PC-9 (cell line): ENCODE measurements at regions of chr9 and their contacts with region 1.

Region 1: DNA sequence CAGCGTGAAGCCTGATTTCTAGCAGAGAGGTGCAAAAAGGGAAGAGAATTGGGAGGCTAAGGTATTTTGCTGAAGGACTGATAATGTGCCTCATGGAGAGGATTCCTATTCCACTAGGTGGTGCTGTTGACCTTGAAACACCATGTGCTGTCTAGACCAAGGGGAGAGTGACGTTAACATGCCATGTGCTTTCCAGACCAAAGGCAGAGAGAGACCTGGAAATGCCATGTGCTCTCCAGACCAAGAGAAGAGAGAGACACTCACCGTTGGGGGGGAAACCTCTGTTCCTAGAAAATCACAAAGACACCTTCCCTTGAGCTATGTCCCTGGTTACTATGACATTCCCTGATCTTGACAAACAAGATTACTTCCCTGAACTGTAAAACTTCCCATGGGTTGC is 286.0 kb upstream of the TUSC1 start:
- DNase-seq: peak; percentile 4 to 43
- H3K4me3 ChIP-seq: no peak overlapping the region
- H3K27ac ChIP-seq: no peak overlapping the region
- H3K4me1 ChIP-seq: no peaks in the 10 kb centered on the region
- H3K27me3 ChIP-seq: no peaks in the 10 kb centered on the region
- CTCF ChIP-seq: peak; percentile 68

Region 2: GRCh38 chr9:25703701-25704357 is 260.4 kb before region 1 on chr9:
- CTCF ChIA-PET with region 1: no interaction called
- POLR2A ChIA-PET with region 1: no interaction called
- intact Hi-C with region 1: no loop called
- DNase-seq: no peak
- H3K4me3 ChIP-seq: no peak overlapping the region
- H3K27ac ChIP-seq: no peak overlapping the region
- H3K4me1 ChIP-seq: peaks cover 20% of the 10 kb centered on the region
- H3K27me3 ChIP-seq: no peaks in the 10 kb centered on the region
- CTCF ChIP-seq: no peak

Region 3: DNA sequence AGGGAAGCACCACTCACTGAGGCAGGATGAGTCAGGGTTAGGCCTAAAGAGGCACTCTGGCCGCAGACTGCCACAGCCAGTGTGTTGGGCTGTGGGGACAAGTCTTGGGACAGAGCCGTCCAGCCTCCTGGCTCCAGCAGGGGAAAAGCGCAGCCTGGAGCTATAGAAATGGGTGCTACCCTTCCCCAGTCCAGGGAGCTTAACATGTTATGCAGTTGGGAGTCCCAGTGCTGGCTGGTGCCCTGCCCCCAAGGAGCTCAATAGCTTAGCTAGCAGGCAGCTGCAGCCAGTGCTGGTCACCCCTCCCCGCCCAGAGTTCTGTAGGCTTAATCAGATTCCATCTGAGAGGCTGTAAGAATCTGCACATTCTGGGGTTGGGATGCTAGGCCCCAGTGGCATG is 113.6 kb after region 1 on chr9:
- CTCF ChIA-PET with region 1: no interaction called
- POLR2A ChIA-PET with region 1: no interaction called
- intact Hi-C with region 1: no loop called
- DNase-seq: no peak
- H3K4me3 ChIP-seq: no peak overlapping the region
- H3K27ac ChIP-seq: no peak overlapping the region
- H3K4me1 ChIP-seq: no peaks in the 10 kb centered on the region
- H3K27me3 ChIP-seq: no peaks in the 10 kb centered on the region
- CTCF ChIP-seq: no peak

Region 4: DNA sequence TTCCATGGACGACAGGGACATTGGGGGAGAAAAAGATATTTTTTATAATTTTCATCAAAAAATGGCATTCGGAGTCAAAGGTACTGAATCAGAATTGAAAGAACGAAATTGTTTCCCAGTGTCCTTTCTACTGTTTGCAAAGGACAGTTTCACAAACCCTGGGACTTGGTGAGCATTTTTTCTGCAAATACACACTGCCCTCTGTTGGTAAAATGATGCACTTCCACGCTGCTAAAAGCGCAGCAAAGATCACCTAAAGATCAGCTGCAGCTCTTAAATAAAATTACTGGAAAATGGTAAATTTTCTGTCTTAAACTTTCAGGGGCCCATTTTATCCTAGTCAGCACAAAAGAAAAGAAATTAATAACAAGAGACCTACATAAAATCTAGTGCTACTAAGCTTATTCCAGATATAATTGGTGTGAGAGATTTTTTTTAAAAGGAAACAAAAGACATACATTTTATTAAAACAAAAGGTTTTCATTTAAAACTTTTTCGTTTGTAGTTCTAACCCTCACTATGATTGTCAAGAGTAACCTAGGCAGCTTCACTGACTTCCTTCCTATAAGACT is 362.3 kb after region 1 on chr9:
- CTCF ChIA-PET with region 1: interaction called, 7 read pairs
- POLR2A ChIA-PET with region 1: no interaction called
- intact Hi-C with region 1: loop called (anchors 1 kb)
- DNase-seq: peak; percentile 28 to 42
- H3K4me3 ChIP-seq: no peak overlapping the region
- H3K27ac ChIP-seq: no peak overlapping the region
- H3K4me1 ChIP-seq: no peaks in the 10 kb centered on the region
- H3K27me3 ChIP-seq: no peaks in the 10 kb centered on the region
- CTCF ChIP-seq: peak; percentile 84